Colonic mucosa (tissue), 4 donors: ENCODE measurements at regions of chr15 and their contacts with region 1.

Region 1: DNA sequence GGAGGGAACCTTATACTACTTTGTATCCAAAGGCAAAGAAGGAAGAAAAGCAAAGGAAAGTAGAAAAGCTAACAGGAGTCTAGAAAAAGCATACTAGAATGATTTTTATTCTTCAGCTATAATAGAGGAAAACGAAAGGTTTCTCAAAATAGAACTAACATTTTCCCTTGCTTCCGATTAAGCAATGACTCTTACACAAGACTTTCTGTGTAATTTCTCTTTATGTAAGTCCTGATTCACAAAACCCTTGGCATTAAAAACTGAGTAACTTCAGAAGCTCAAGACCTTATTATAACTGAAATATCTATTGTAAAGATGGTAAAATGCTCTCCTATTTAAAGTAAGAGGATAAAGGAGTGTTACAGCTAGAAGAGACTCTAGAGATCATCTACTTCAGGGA is 97.4 kb downstream of the DTWD1 start:
- DNase-seq: no peak
- H3K4me3 ChIP-seq: no peak overlapping the region
- H3K27ac ChIP-seq: no peak overlapping the region
- H3K4me1 ChIP-seq: no peaks in the 10 kb centered on the region
- H3K27me3 ChIP-seq: no peaks in the 10 kb centered on the region
- CTCF ChIP-seq: no peak

Region 2: GRCh38 chr15:49573421-49573820 is 144.8 kb before region 1 on chr15:
- intact Hi-C with region 1: no loop called
- DNase-seq: no peak
- H3K4me3 ChIP-seq: no peak overlapping the region
- H3K27ac ChIP-seq: no peak overlapping the region
- H3K4me1 ChIP-seq: no peaks in the 10 kb centered on the region
- H3K27me3 ChIP-seq: no peaks in the 10 kb centered on the region
- CTCF ChIP-seq: no peak

Region 3: DNA sequence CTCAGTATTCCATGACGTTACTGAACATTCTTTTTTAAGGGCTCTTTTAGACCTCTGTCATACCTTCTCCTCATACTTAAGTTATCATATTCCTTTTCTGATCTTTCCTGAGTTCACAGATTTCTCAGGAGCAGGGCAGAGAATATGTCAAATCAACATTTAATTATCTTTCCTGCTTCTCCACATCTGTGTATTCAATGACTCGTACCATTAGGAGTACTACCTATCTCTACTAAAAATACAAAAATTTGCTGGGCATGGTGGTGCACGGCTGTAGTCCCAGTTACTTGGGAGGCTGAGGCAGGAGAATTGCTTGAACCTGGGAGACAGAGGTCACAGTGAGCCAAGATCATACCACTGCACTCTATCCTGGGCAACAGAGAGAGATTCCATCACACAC is 56.5 kb after region 1 on chr15:
- intact Hi-C with region 1: loop called (anchors 10 kb)
- DNase-seq: no peak
- H3K4me3 ChIP-seq: no peak overlapping the region
- H3K27ac ChIP-seq: no peak overlapping the region
- H3K4me1 ChIP-seq: no peaks in the 10 kb centered on the region
- H3K27me3 ChIP-seq: no peaks in the 10 kb centered on the region
- CTCF ChIP-seq: no peak

Region 4: DNA sequence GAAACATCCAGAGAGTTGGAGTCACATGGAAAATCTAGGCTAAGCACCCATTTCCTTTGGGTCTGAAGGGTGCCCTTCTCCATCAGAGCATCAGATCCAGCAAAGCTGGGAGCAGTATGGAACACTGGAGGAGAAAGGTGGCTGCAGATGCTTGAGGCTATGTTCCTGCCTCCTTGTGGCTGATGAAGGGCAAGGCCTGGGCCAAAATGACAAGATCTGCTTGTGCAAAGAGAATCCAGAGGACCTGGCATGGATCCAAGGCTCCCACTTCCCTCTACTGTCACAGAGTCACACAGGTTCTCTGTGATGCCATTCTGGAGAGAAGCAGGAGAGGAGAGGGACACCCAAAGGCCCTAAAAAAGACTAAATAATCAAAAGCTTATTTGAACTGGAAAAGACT is 410.0 kb after region 1 on chr15:
- intact Hi-C with region 1: no loop called
- DNase-seq: peak; percentile 44
- H3K4me3 ChIP-seq: no peak overlapping the region
- H3K27ac ChIP-seq: no peak overlapping the region
- H3K4me1 ChIP-seq: no peaks in the 10 kb centered on the region
- H3K27me3 ChIP-seq: no peaks in the 10 kb centered on the region
- CTCF ChIP-seq: no peak